ENCODE measurements at regions of chr5 and their contacts with region 1.

Region 1: GRCh38 chr5:178232124-178232919 is at the start of gene PHYKPL:
- DNase-seq: peak; percentile 74
- ATAC-seq: peak; percentile 75
- H3K4me3 Mint-ChIP-seq: peak within 1 kb of the TSS; percentile 86
- H3K27ac Mint-ChIP-seq: peak within 1 kb of the TSS; percentile 84
- H3K4me1 Mint-ChIP-seq: peaks cover 47% of the 10 kb centered on the region
- H3K27me3 Mint-ChIP-seq: no peaks in the 10 kb centered on the region
- CTCF ChIP-seq: no peak
- total RNA-seq, gene PHYKPL: 176 and 205 TPM in 2 replicates

Region 2: DNA sequence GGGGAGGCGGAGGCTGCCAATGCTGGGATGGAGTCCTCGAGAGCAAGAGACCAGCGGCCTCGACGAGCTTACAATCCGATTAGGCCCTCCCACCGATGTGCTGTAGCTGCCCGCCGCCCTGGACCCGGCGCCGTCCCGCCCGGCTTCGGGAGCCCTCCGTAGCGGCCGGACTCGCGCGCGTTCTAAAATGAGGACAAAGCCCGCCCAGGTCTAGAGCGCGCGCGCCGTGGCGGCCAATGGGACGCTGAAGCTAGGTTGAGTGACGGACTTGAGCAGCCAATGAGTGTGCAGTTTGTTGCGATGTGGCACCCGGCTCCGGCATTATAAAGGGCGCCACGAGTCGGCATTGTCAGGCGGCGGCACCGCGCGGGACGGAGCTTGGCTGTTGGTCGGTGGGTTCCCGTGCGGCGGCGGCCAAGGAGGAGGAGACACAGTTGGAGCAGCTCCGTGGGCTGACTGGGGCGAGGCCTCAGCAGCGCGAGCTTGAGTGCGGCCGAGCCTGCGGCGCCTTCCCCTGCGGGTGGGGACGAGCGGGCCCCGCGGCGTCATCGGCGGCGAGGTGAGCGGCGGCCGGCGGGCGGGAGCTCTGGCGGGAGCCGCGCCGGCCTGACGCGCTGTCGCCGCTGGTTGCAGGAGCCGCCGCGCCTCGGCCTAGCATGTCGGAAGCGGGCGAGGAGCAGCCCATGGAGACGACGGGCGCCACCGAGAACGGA is 28.0 kb before region 1 on chr5 and contains the start of gene HNRNPAB:
- CTCF ChIA-PET with region 1: interaction called, 5 read pairs
- POLR2A ChIA-PET with region 1: interaction called, 17 read pairs
- intact Hi-C with region 1: loop called (anchors 1 kb)
- DNase-seq: peak; percentile 95
- ATAC-seq: peak; percentile 80
- H3K4me3 Mint-ChIP-seq: peak within 1 kb of the TSS; percentile 95
- H3K27ac Mint-ChIP-seq: peak within 1 kb of the TSS; percentile 95
- H3K4me1 Mint-ChIP-seq: peaks cover 28% of the 10 kb centered on the region
- H3K27me3 Mint-ChIP-seq: no peaks in the 10 kb centered on the region
- CTCF ChIP-seq: no peak
- total RNA-seq, gene HNRNPAB: 118 and 120 TPM in 2 replicates

Region 3: GRCh38 chr5:178250263-178250662 is 17.9 kb after region 1 on chr5:
- CTCF ChIA-PET with region 1: interaction called, 3 read pairs
- POLR2A ChIA-PET with region 1: interaction called, 11 read pairs
- intact Hi-C with region 1: no loop called
- DNase-seq: no peak
- ATAC-seq: no peak
- H3K4me3 Mint-ChIP-seq: no peak overlapping the region
- H3K27ac Mint-ChIP-seq: no peak overlapping the region
- H3K4me1 Mint-ChIP-seq: peaks cover 22% of the 10 kb centered on the region
- H3K27me3 Mint-ChIP-seq: no peaks in the 10 kb centered on the region
- CTCF ChIP-seq: no peak

Region 4: GRCh38 chr5:178461004-178461730 is 228.8 kb after region 1 on chr5:
- CTCF ChIA-PET with region 1: interaction called, 3 read pairs
- POLR2A ChIA-PET with region 1: no interaction called
- intact Hi-C with region 1: loop called (anchors 5 kb)
- DNase-seq: peak; percentile 27
- ATAC-seq: no peak
- H3K4me3 Mint-ChIP-seq: no peak overlapping the region
- H3K27ac Mint-ChIP-seq: no peak overlapping the region
- H3K4me1 Mint-ChIP-seq: no peaks in the 10 kb centered on the region
- H3K27me3 Mint-ChIP-seq: peaks cover 5% of the 10 kb centered on the region
- CTCF ChIP-seq: no peak

Region 5: GRCh38 chr5:178551059-178551458 is 318.7 kb after region 1 on chr5:
- CTCF ChIA-PET with region 1: interaction called, 18 read pairs
- POLR2A ChIA-PET with region 1: interaction called, 5 read pairs
- intact Hi-C with region 1: no loop called
- DNase-seq: no peak
- ATAC-seq: no peak
- H3K4me3 Mint-ChIP-seq: no peak overlapping the region
- H3K27ac Mint-ChIP-seq: no peak overlapping the region
- H3K4me1 Mint-ChIP-seq: no peaks in the 10 kb centered on the region
- H3K27me3 Mint-ChIP-seq: peaks cover 11% of the 10 kb centered on the region
- CTCF ChIP-seq: no peak

Region 6: GRCh38 chr5:178732281-178732680 is 500.0 kb after region 1 on chr5:
- CTCF ChIA-PET with region 1: interaction called, 3 read pairs
- POLR2A ChIA-PET with region 1: no interaction called
- intact Hi-C with region 1: loop called (anchors 1 kb)
- DNase-seq: no peak
- ATAC-seq: no peak
- H3K4me3 Mint-ChIP-seq: no peak overlapping the region
- H3K27ac Mint-ChIP-seq: no peak overlapping the region
- H3K4me1 Mint-ChIP-seq: peaks cover 10% of the 10 kb centered on the region
- H3K27me3 Mint-ChIP-seq: peaks cover 2% of the 10 kb centered on the region
- CTCF ChIP-seq: no peak

Region 7: DNA sequence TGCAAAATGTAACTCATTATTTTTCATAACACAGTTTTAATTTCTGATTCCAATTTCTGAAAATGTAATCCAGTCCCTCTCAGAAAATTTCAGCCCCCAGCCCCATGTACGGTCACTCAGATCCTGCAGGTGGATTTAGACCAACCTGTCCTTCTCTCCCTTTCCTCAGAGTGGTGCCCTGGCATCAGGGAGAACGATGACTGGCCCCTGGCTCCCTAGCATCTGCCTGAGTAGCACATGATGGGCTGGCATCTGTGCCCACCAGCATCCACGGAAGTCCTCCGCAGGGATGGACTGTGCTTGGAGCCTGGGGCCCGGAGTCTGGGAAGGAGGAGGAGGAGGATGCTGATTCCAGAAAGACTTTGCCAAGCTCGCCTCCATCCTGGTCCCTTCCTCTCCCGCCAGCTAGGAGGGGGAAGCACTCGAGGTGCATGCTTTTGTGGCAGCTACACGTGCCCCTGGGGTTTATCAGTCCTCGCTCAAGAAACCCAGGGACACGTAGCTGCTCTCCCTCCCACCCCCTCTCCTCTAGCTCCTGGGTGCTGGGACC is 1263.7 kb after region 1 on chr5:
- CTCF ChIA-PET with region 1: interaction called, 3 read pairs
- POLR2A ChIA-PET with region 1: no interaction called
- intact Hi-C with region 1: loop called (anchors 5 kb)
- DNase-seq: no peak
- ATAC-seq: no peak
- H3K4me3 Mint-ChIP-seq: no peak overlapping the region
- H3K27ac Mint-ChIP-seq: no peak overlapping the region
- H3K4me1 Mint-ChIP-seq: peaks cover 2% of the 10 kb centered on the region
- H3K27me3 Mint-ChIP-seq: peaks cover 2% of the 10 kb centered on the region
- CTCF ChIP-seq: no peak

Measured in activated B cell treated with CpG ODN at 0.5 μM for 24 hours (primary cell).